T-cell (primary cell): ENCODE measurements at regions of chr4 and their contacts with region 1.

Region 1: DNA sequence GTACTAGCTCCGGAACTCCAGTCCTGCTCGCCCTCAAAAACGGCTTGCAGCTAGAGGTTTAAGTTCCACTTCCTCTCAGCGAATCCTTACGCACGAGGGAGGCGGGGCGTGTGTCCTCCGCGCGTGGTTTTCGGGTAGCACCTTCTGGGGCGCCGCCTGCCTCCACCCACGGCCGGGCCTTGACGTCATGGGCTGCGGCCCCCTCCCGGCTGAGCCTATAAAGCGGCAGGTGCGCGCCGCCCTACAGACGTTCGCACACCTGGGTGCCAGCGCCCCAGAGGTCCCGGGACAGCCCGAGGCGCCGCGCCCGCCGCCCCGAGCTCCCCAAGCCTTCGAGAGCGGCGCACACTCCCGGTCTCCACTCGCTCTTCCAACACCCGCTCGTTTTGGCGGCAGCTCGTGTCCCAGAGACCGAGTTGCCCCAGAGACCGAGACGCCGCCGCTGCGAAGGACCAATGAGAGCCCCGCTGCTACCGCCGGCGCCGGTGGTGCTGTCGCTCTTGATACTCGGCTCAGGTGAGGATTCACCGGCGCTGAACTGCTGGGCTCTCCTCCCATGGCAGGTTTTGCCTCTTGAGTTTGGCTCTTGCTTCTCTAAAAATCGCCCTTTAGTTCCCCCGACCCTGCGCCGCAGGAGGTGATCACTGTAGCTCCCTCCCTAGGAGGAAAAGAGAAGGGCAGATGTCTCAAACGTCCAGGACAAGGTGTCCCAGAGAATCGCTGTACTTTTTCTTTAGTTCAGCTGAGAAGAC is at the start of gene AREG:
- DNase-seq: peak; percentile 65 to 97 (median 92)
- ATAC-seq: peak; percentile 93 to 94 (median 93)
- H3K4me3 ChIP-seq: peak within 1 kb of the TSS; percentile 63 to 87
- H3K4me3 Mint-ChIP-seq: peak within 1 kb of the TSS; percentile 89 to 99 (median 92)
- H3K27ac ChIP-seq: peak within 1 kb of the TSS; percentile 92
- H3K27ac Mint-ChIP-seq: peak within 1 kb of the TSS; percentile 87 to 93
- H3K4me1 ChIP-seq: peaks cover 0 to 11% of the 10 kb centered on the region in 2 experiments
- H3K4me1 Mint-ChIP-seq: peaks cover 14 to 17% (median 14%) of the 10 kb centered on the region in 3 donors
- H3K27me3 ChIP-seq: peaks cover 0 to 4% of the 10 kb centered on the region in 2 experiments
- H3K27me3 Mint-ChIP-seq: no peaks in the 10 kb centered on the region
- total RNA-seq, gene AREG: 0.54 to 29.4 (median 1.1) TPM

Region 2: GRCh38 chr4:74397748-74398426 is 47.2 kb before region 1 on chr4:
- CTCF ChIA-PET with region 1: interaction called, 3 to 8 read pairs
- POLR2A ChIA-PET with region 1: interaction called, 4 to 24 read pairs
- DNase-seq: peak in 1 of 35 experiments; percentile 60
- ATAC-seq: peak; percentile 64 to 81 (median 77)
- H3K4me3 ChIP-seq: peak overlapping the region; percentile 59 to 70
- H3K4me3 Mint-ChIP-seq: peak overlapping the region; percentile 94 to 96 (median 95)
- H3K27ac ChIP-seq: peak overlapping the region; percentile 84
- H3K27ac Mint-ChIP-seq: peak overlapping the region; percentile 98
- H3K4me1 ChIP-seq: no peaks in the 10 kb centered on the region
- H3K4me1 Mint-ChIP-seq: peaks cover 5 to 13% (median 7%) of the 10 kb centered on the region in 3 donors
- H3K27me3 ChIP-seq: no peaks in the 10 kb centered on the region
- H3K27me3 Mint-ChIP-seq: no peaks in the 10 kb centered on the region